CD8-positive, alpha-beta T cell (primary cell): ENCODE measurements at regions of chr3 and their contacts with region 1.

Region 1: DNA sequence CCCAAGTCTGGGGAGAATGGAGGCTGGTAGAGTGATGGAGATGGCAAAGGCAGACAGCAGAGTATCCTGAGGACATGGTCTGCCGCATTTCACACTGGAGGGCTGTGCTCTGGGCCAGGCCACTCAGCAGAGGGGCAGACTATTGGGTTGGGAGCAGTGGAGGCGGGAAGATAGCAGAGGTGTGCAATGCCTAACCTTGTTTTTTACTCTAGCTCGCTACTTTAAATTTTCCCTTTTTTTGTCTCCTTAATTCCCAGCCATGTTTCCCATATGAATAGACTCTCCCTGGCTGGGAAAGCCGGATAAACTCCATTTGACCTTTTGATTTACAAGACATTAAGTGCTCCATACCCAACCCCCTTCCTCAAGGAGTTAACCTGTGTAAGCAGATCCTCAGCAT is 33.5 kb upstream of the ST6GAL1 start:
- DNase-seq: no peak
- ATAC-seq: no peak
- H3K4me3 ChIP-seq: no peak overlapping the region
- H3K4me3 Mint-ChIP-seq: no peak overlapping the region
- H3K27ac ChIP-seq: no peak overlapping the region
- H3K27ac Mint-ChIP-seq: no peak overlapping the region
- H3K4me1 ChIP-seq: peaks cover 13% of the 10 kb centered on the region
- H3K4me1 Mint-ChIP-seq: peaks cover 15% of the 10 kb centered on the region
- H3K27me3 ChIP-seq: no peaks in the 10 kb centered on the region
- H3K27me3 Mint-ChIP-seq: no peaks in the 10 kb centered on the region
- CTCF ChIP-seq: no peak

Region 2: DNA sequence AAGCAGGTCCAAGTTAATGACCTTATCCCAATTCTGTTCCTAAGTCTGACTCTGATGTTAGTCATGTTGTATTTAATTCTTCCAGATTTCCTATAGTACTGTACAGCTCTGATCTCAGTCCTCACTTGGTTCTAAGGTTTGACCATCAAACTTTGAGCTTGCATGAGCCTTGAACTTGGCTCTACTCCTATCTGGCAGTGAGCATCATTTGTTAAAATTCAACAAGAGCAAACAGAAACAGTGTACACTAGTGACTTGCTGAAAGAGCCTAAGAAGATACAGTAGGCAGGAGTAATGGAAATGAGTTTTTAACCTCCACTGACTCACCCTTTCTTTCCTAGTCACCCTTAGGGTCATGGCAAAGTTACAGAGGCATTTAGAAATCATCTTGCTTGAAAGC is 1823.8 kb after region 1 on chr3:
- CTCF ChIA-PET with region 1: no interaction called
- POLR2A ChIA-PET with region 1: no interaction called
- intact Hi-C with region 1: loop called in 1 of 2 experiments (anchors 10 kb)
- DNase-seq: no peak
- ATAC-seq: no peak
- H3K4me3 ChIP-seq: no peak overlapping the region
- H3K4me3 Mint-ChIP-seq: no peak overlapping the region
- H3K27ac ChIP-seq: no peak overlapping the region
- H3K27ac Mint-ChIP-seq: no peak overlapping the region
- H3K4me1 ChIP-seq: no peaks in the 10 kb centered on the region
- H3K4me1 Mint-ChIP-seq: peaks cover 3% of the 10 kb centered on the region
- H3K27me3 ChIP-seq: no peaks in the 10 kb centered on the region
- H3K27me3 Mint-ChIP-seq: no peaks in the 10 kb centered on the region
- CTCF ChIP-seq: no peak